A549 (cell line): ENCODE measurements at regions of chr2 and their contacts with region 1.

Region 1: DNA sequence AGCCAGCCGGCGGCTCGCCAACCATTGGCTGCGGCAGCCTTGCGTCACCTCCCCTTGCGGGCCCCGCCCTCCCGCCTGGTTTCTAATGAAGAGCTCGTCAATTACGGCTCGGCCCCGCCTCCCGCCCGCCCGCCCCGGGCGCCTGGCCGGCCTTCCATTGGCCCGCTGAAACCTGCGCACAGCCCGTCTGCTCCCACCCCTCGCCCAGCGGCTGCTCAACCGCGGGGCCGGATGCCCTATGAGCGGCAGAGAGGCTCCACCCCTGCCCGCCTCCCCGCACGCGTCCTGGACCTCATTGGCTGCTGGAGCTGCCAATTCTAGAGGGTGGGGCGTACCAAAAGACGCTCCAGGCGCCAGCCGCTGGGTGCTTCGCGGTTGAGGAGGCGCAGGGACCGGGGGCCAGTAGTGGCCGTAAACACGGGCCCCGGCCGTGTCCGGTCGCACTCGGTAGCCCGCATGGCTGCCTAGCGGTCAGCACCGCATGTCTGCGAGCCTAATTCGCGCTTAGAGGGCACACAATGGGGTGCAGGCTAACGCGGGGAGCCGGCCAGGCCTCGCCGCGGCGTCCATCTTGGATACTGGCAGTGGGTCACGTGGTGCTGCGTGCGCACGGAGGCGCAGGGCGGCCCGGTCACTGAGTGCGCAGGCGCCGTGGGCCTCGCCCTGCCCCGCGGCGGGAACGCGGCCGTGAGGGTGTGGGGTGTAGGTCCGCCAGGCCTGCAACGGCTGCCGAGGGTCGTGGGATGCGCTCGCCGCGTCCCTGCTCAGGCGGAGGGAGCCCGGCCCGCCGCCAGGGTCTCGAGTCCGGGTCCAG is 454 bp upstream of the HDAC4 start:
- DNase-seq: peak; percentile 95 to 98
- ATAC-seq: peak; percentile 94 to 99
- H3K4me3 ChIP-seq: peak overlapping the region; percentile 87
- H3K27ac ChIP-seq: peak overlapping the region; percentile 97 to 98
- H3K4me1 ChIP-seq: peaks cover 17% of the 10 kb centered on the region
- CTCF ChIP-seq: no peak
- EP300 ChIP-seq: no peak; a peak in 1 of 5 replicates
- POLR2A ChIP-seq: peak; percentile 96
- RAD21 ChIP-seq: no peak; a peak in 1 of 5 replicates

Region 2: DNA sequence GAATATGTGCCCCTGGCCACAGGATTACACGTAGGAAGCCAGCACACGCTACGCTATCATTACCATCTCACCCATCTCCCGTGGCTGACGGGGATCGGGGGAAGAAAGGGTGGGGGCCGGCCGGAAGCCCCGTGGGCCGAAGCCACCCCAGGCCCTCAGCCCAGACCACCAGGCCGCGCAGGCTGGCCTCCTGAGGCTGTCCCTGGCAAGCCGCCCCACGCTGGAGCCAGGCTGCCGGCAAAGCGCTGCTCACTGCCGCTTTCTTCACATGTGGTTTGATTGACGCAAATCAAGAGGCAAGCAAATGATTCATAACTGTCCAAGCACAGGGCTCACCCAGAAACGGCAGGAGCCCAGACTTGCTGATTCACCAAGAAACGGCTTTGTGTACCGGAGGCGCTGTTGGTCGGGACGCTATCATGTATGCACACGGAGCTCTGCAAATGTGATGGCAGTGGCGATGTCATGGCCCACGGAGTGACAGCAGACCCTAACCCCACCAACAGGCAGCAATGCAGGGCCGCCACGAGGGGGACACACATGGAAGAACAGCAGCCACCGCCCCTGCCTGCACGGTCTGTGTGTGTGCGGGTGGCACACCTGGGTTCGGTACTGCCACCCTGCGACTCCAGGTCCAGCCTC is 126.1 kb before region 1 on chr2:
- CTCF ChIA-PET with region 1: no interaction called
- POLR2A ChIA-PET with region 1: interaction called, 10 read pairs
- DNase-seq: peak; percentile 82 to 97
- ATAC-seq: peak; percentile 83 to 89
- H3K4me3 ChIP-seq: peak overlapping the region; percentile 42; the same call in 2 of the 3 replicates
- H3K27ac ChIP-seq: peak overlapping the region; percentile 97 to 99
- H3K4me1 ChIP-seq: peaks cover 78% of the 10 kb centered on the region
- CTCF ChIP-seq: 0 out of 3 replicates have a peak, but pooled peaks have one; percentile 15
- EP300 ChIP-seq: peak; percentile 69 to 87; a peak in 4 of 5 replicates
- POLR2A ChIP-seq: peak; percentile 25; the same call in 1 of the 2 replicates
- RAD21 ChIP-seq: peak in 1 of 2 experiments; percentile 43; a peak in 1 of 5 replicates